CD4-positive, alpha-beta T cell (primary cell): ENCODE measurements at regions of chr10 and their contacts with region 1.

Region 1: GRCh38 chr10:84194424-84195040 is at the start of gene CDHR1:
- DNase-seq: peak in 8 of 14 experiments; percentile 19 to 64 (median 44)
- ATAC-seq: peak; percentile 51
- H3K4me3 ChIP-seq: peak within 1 kb of the TSS; percentile 44
- H3K4me3 Mint-ChIP-seq: peak within 1 kb of the TSS; percentile 61
- H3K27ac ChIP-seq: no peak within 1 kb of the TSS
- H3K27ac Mint-ChIP-seq: no peak within 1 kb of the TSS
- H3K4me1 ChIP-seq: peaks cover 37% of the 10 kb centered on the region
- H3K4me1 Mint-ChIP-seq: peaks cover 14% of the 10 kb centered on the region
- H3K27me3 ChIP-seq: peaks cover 29 to 35% of the 10 kb centered on the region in 2 experiments
- H3K27me3 Mint-ChIP-seq: peaks cover 30% of the 10 kb centered on the region
- CTCF ChIP-seq: no peak
- total RNA-seq, gene CDHR1: 0.74 to 0.92 TPM

Region 2: GRCh38 chr10:83896219-83896618 is 298.3 kb before region 1 on chr10:
- CTCF ChIA-PET with region 1: no interaction called
- POLR2A ChIA-PET with region 1: no interaction called
- intact Hi-C with region 1: no loop called
- DNase-seq: no peak
- ATAC-seq: no peak
- H3K4me3 ChIP-seq: no peak overlapping the region
- H3K4me3 Mint-ChIP-seq: no peak overlapping the region
- H3K27ac ChIP-seq: no peak overlapping the region
- H3K27ac Mint-ChIP-seq: no peak overlapping the region
- H3K4me1 ChIP-seq: no peaks in the 10 kb centered on the region
- H3K4me1 Mint-ChIP-seq: no peaks in the 10 kb centered on the region
- H3K27me3 ChIP-seq: no peaks in the 10 kb centered on the region
- H3K27me3 Mint-ChIP-seq: no peaks in the 10 kb centered on the region
- CTCF ChIP-seq: no peak

Region 3: DNA sequence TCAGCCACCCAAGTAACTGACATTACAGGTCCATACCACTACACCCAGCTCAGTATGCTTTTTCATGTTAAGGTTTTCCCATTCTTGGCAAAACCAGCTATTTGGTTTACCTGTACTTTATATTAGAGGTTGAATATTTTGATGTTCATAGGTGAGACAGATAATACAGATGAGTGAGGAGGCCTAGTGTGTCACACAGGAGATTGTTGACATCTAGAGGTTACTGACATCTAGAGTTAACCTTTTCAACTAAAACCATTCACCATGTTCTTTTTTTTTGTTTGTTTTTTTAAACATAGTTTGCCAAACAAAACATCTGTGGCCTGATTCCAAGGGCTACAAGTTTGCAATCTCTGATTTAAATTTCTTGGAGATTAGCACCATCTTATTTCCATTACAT is 47.2 kb before region 1 on chr10:
- CTCF ChIA-PET with region 1: no interaction called
- POLR2A ChIA-PET with region 1: no interaction called
- intact Hi-C with region 1: loop called in 1 of 2 experiments (anchors 5 kb)
- DNase-seq: no peak
- ATAC-seq: no peak
- H3K4me3 ChIP-seq: no peak overlapping the region
- H3K4me3 Mint-ChIP-seq: no peak overlapping the region
- H3K27ac ChIP-seq: no peak overlapping the region
- H3K27ac Mint-ChIP-seq: no peak overlapping the region
- H3K4me1 ChIP-seq: no peaks in the 10 kb centered on the region
- H3K4me1 Mint-ChIP-seq: peaks cover 19% of the 10 kb centered on the region
- H3K27me3 ChIP-seq: no peaks in the 10 kb centered on the region
- H3K27me3 Mint-ChIP-seq: no peaks in the 10 kb centered on the region
- CTCF ChIP-seq: no peak

Region 4: DNA sequence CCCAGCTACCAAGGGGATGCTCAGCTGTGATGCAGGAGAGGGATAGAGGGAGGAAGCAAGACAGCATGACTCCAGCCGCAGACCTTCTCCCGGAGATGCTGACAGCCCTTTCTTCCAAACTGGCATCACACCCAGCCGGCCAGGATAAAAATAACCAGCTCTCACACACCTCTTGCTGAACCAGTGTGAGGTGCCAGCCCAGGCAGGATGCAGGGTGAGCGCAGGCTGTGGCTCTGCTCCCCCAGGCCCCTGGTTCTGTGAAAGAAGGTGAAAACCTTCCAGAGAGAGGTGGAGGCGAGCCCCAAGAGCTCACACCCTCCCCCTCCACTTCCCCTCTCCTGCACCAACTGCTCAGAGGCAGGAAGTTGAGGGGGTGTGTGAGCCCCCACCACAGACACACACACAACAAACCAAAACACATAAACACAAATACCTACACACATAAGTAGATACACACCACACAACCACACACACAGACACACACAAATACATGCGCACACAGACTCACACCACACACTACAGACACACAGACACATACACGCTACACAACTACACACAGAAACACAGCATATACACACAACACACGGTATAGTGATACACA is 16.9 kb before region 1 on chr10:
- CTCF ChIA-PET with region 1: no interaction called
- POLR2A ChIA-PET with region 1: interaction called, 9 read pairs
- intact Hi-C with region 1: loop called in 1 of 2 experiments (anchors 1 kb)
- DNase-seq: peak in 12 of 14 experiments; percentile 10 to 86 (median 43)
- ATAC-seq: peak; percentile 79
- H3K4me3 ChIP-seq: no peak overlapping the region
- H3K4me3 Mint-ChIP-seq: no peak overlapping the region
- H3K27ac ChIP-seq: peak overlapping the region; percentile 5 to 68
- H3K27ac Mint-ChIP-seq: no peak overlapping the region
- H3K4me1 ChIP-seq: peaks cover 33% of the 10 kb centered on the region
- H3K4me1 Mint-ChIP-seq: peaks cover 13% of the 10 kb centered on the region
- H3K27me3 ChIP-seq: no peaks in the 10 kb centered on the region
- H3K27me3 Mint-ChIP-seq: no peaks in the 10 kb centered on the region
- CTCF ChIP-seq: no peak